ENCODE measurements at regions of chr11 and their contacts with region 1.

Region 1: DNA sequence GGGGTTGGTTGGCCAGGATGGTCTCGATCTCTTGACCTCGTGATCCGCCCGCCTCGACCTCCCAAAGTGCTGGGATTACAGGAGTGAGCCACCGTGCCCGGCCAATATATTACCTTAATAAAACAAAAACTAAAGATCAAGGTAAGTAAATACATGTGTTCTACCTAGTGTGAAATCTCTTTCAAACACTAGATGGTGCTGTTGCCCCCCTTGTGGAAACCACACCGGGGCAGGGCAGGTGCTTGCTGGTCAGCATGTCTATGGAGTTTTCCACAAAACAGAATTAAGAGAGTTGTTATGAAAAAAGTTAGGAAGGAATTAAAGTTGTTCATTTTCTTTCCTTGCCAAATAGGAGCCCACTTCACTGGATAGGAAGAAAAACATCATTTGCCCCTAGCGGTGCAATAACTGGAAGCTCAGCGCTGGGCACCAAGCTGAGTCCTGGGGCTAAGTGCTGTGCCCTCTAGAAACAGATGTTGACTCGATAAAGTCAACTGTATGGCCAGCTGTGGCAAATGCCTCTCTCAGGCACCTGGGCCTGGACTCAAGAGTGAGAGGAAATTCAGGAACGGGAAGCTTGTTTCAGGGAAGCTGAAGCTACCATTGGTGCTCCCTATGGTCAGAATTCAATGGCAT is 6.3 kb upstream of the KCNJ5 start:
- DNase-seq: peak in 2 of 3 donors; percentile 47 to 82
- ATAC-seq: peak; percentile 88
- H3K4me3 ChIP-seq: no peak overlapping the region
- H3K4me1 ChIP-seq: no peaks in the 10 kb centered on the region
- CTCF ChIP-seq: peak; percentile 32

Region 2: GRCh38 chr11:128467610-128468041 is 417.2 kb before region 1 on chr11:
- intact Hi-C with region 1: no loop called
- DNase-seq: no peak
- ATAC-seq: peak; percentile 21
- H3K4me3 ChIP-seq: no peak overlapping the region
- H3K4me1 ChIP-seq: peaks cover 37% of the 10 kb centered on the region
- CTCF ChIP-seq: no peak

Region 3: GRCh38 chr11:128841461-128842072 is 43.3 kb before region 1 on chr11:
- intact Hi-C with region 1: no loop called
- DNase-seq: no peak
- ATAC-seq: peak; percentile 57
- H3K4me3 ChIP-seq: no peak overlapping the region
- H3K4me1 ChIP-seq: no peaks in the 10 kb centered on the region
- CTCF ChIP-seq: no peak

Region 4: GRCh38 chr11:128949791-128950454 is 65.1 kb after region 1 on chr11:
- intact Hi-C with region 1: loop called in 1 of 2 experiments (anchors 5 kb)
- DNase-seq: peak in 1 of 3 donors; percentile 28
- ATAC-seq: peak; percentile 46
- H3K4me3 ChIP-seq: no peak overlapping the region
- H3K4me1 ChIP-seq: no peaks in the 10 kb centered on the region
- CTCF ChIP-seq: no peak

Region 5: GRCh38 chr11:128956401-128957201 is 71.8 kb after region 1 on chr11:
- intact Hi-C with region 1: loop called (anchors 2 to 5 kb)
- DNase-seq: peak in 1 of 3 donors; percentile 70
- ATAC-seq: peak; percentile 88
- H3K4me3 ChIP-seq: no peak overlapping the region
- H3K4me1 ChIP-seq: no peaks in the 10 kb centered on the region
- CTCF ChIP-seq: peak; percentile 46

Region 6: GRCh38 chr11:128963744-128964325 is 79.0 kb after region 1 on chr11:
- intact Hi-C with region 1: loop called in 1 of 2 experiments (anchors 5 kb)
- DNase-seq: no peak
- ATAC-seq: no peak
- H3K4me3 ChIP-seq: no peak overlapping the region
- H3K4me1 ChIP-seq: no peaks in the 10 kb centered on the region
- CTCF ChIP-seq: no peak

Region 7: GRCh38 chr11:129041611-129042018 is 156.8 kb after region 1 on chr11:
- intact Hi-C with region 1: no loop called
- DNase-seq: no peak
- ATAC-seq: no peak
- H3K4me3 ChIP-seq: no peak overlapping the region
- H3K4me1 ChIP-seq: no peaks in the 10 kb centered on the region
- CTCF ChIP-seq: no peak

Measured in mucosa of descending colon (tissue), 3 donors.